Activated CD4-positive, alpha-beta T cell treated with anti-CD3 and anti-CD28 coated beads for 36 hours (primary cell): ENCODE measurements at regions of chr5 and their contacts with region 1.

Region 1: GRCh38 chr5:142769741-142770631 is at the start of gene ARHGAP26:
- DNase-seq: peak; percentile 96
- ATAC-seq: peak; percentile 91
- H3K4me3 Mint-ChIP-seq: peak within 1 kb of the TSS; percentile 84
- H3K27ac Mint-ChIP-seq: peak within 1 kb of the TSS; percentile 88
- H3K4me1 Mint-ChIP-seq: peaks cover 40% of the 10 kb centered on the region
- H3K27me3 Mint-ChIP-seq: no peaks in the 10 kb centered on the region
- total RNA-seq, gene ARHGAP26: 12.8 to 15.4 TPM

Region 2: GRCh38 chr5:142356716-142357473 is 413.1 kb before region 1 on chr5:
- CTCF ChIA-PET with region 1: no interaction called
- POLR2A ChIA-PET with region 1: no interaction called
- intact Hi-C with region 1: loop called in 1 of 2 experiments (anchors 5 kb)
- DNase-seq: peak; percentile 94
- ATAC-seq: peak; percentile 85
- H3K4me3 Mint-ChIP-seq: peak overlapping the region; percentile 70
- H3K27ac Mint-ChIP-seq: peak overlapping the region; percentile 96
- H3K4me1 Mint-ChIP-seq: peaks cover 49% of the 10 kb centered on the region
- H3K27me3 Mint-ChIP-seq: no peaks in the 10 kb centered on the region

Region 3: DNA sequence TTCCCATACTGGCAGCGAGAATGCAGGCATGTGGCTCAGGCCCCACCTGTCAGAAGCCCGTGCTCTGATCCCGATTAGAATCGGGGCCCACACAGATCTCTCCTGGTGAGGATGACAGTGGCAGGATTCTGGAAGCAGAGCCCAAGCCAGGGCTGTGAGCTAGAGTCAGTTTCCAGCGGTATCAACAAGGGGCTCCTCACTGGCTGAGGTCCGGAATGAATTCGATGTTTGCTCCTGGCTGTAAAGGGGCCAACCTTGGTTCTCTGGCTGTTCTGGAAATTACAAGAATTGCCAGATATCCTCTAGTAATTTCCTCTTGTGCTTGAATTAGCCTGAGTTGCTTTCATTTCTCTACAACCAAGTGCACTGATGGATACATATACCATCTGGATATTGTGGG is 316.1 kb before region 1 on chr5:
- CTCF ChIA-PET with region 1: no interaction called
- POLR2A ChIA-PET with region 1: no interaction called
- intact Hi-C with region 1: no loop called
- DNase-seq: no peak
- ATAC-seq: no peak
- H3K4me3 Mint-ChIP-seq: no peak overlapping the region
- H3K27ac Mint-ChIP-seq: no peak overlapping the region
- H3K4me1 Mint-ChIP-seq: no peaks in the 10 kb centered on the region
- H3K27me3 Mint-ChIP-seq: peaks cover 2% of the 10 kb centered on the region

Region 4: GRCh38 chr5:142800776-142801494 is 30.9 kb after region 1 on chr5:
- CTCF ChIA-PET with region 1: interaction called, 48 read pairs
- POLR2A ChIA-PET with region 1: interaction called, 5 read pairs
- intact Hi-C with region 1: loop called (anchors 1 to 2 kb)
- DNase-seq: peak; percentile 72
- ATAC-seq: peak; percentile 84
- H3K4me3 Mint-ChIP-seq: peak overlapping the region; percentile 69
- H3K27ac Mint-ChIP-seq: peak overlapping the region; percentile 97
- H3K4me1 Mint-ChIP-seq: peaks cover 66% of the 10 kb centered on the region
- H3K27me3 Mint-ChIP-seq: no peaks in the 10 kb centered on the region

Region 5: GRCh38 chr5:142826741-142827732 is 57.1 kb after region 1 on chr5:
- CTCF ChIA-PET with region 1: interaction called, 17 read pairs
- POLR2A ChIA-PET with region 1: no interaction called
- intact Hi-C with region 1: loop called (anchors 1 kb)
- DNase-seq: peak; percentile 60
- ATAC-seq: peak; percentile 57
- H3K4me3 Mint-ChIP-seq: no peak overlapping the region
- H3K27ac Mint-ChIP-seq: peak overlapping the region; percentile 63
- H3K4me1 Mint-ChIP-seq: peaks cover 73% of the 10 kb centered on the region
- H3K27me3 Mint-ChIP-seq: no peaks in the 10 kb centered on the region

Region 6: GRCh38 chr5:142881076-142881783 is 111.2 kb after region 1 on chr5:
- CTCF ChIA-PET with region 1: interaction called, 14 read pairs
- POLR2A ChIA-PET with region 1: no interaction called
- intact Hi-C with region 1: no loop called
- DNase-seq: no peak
- ATAC-seq: peak; percentile 58
- H3K4me3 Mint-ChIP-seq: no peak overlapping the region
- H3K27ac Mint-ChIP-seq: no peak overlapping the region
- H3K4me1 Mint-ChIP-seq: no peaks in the 10 kb centered on the region
- H3K27me3 Mint-ChIP-seq: no peaks in the 10 kb centered on the region

Region 7: GRCh38 chr5:143161893-143162540 is 392.0 kb after region 1 on chr5:
- CTCF ChIA-PET with region 1: no interaction called
- POLR2A ChIA-PET with region 1: no interaction called
- intact Hi-C with region 1: no loop called
- DNase-seq: no peak
- ATAC-seq: no peak
- H3K4me3 Mint-ChIP-seq: no peak overlapping the region
- H3K27ac Mint-ChIP-seq: no peak overlapping the region
- H3K4me1 Mint-ChIP-seq: no peaks in the 10 kb centered on the region
- H3K27me3 Mint-ChIP-seq: no peaks in the 10 kb centered on the region

Region 8: DNA sequence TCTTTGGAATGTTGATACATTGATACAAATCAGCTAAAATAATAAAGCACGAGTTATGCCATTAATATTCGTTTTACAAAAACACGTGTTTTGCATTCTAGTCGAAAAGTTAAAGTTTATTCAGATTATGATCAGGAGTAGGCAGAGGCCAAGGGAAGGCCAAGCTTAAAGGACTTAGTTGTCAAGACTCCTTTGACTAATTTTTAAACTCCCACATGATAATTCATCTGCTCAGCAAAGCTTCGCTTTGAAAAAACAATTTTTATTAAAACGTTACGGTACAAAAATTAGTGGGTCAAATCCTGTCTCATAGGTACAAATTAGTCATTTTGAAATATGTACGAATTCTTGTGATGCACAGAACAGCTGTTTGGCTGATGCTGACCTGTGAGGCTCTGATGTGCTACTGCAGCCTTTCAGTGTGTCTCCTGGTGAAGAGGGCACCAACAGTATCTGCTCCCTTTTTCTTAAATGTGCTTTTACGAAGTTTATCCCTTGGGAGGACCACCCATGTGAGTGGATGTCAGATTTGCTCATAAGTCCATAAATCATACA is 656.5 kb after region 1 on chr5:
- CTCF ChIA-PET with region 1: no interaction called
- POLR2A ChIA-PET with region 1: no interaction called
- intact Hi-C with region 1: no loop called
- DNase-seq: no peak
- ATAC-seq: peak; percentile 59
- H3K4me3 Mint-ChIP-seq: no peak overlapping the region
- H3K27ac Mint-ChIP-seq: peak overlapping the region; percentile 24
- H3K4me1 Mint-ChIP-seq: peaks cover 43% of the 10 kb centered on the region
- H3K27me3 Mint-ChIP-seq: no peaks in the 10 kb centered on the region